Panc1 (cell line): ENCODE measurements at regions of chr15 and their contacts with region 1.

Region 1: GRCh38 chr15:53747501-53748068 is 11.9 kb downstream of the WDR72 start:
- DNase-seq: no peak
- ATAC-seq: no peak
- H3K4me3 ChIP-seq: no peak overlapping the region
- H3K27ac ChIP-seq: no peak overlapping the region
- H3K4me1 ChIP-seq: no peaks in the 10 kb centered on the region
- H3K27me3 ChIP-seq: no peaks in the 10 kb centered on the region
- CTCF ChIP-seq: no peak

Region 2: DNA sequence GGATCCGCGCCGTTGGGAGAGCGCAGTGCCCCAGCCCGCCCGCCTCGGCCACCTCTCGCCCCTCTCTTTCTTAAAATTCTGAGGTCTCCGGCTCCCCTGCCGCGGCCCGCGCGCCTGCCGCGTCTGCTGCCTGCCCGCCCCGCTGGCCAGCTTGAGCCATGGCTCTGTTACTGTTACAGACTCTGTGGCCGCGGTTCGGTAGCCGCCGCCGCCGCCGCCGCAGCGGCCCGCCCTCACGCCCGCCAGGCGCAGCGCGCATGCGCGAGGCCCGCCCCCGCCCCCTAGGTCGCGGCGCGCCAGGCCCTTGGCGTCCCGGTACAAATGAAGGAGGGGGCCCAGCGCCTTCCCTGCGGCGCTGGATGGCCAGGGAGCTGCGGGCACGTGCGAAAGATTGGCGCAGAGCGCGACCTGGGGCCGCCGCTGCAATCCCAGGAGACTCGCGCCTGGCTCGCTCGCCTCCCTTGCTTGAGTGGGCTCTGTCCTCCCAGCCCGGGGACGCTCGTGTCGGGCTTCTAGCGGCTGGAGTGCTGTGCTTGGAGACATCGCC is 957.4 kb before region 1 on chr15 and contains the start of gene ONECUT1:
- CTCF ChIA-PET with region 1: no interaction called
- POLR2A ChIA-PET with region 1: interaction called, 10 read pairs
- in situ Hi-C with region 1: no loop called
- intact Hi-C with region 1: no loop called
- DNase-seq: no peak
- ATAC-seq: peak; percentile 80
- H3K4me3 ChIP-seq: peak within 1 kb of the TSS; percentile 54 to 70
- H3K27ac ChIP-seq: no peak within 1 kb of the TSS
- H3K4me1 ChIP-seq: peaks cover 20% of the 10 kb centered on the region
- H3K27me3 ChIP-seq: peaks cover 21% of the 10 kb centered on the region
- CTCF ChIP-seq: no peak
- total RNA-seq, gene ONECUT1: 0.18 TPM